ENCODE measurements at regions of chr14 and their contacts with region 1.

Region 1: DNA sequence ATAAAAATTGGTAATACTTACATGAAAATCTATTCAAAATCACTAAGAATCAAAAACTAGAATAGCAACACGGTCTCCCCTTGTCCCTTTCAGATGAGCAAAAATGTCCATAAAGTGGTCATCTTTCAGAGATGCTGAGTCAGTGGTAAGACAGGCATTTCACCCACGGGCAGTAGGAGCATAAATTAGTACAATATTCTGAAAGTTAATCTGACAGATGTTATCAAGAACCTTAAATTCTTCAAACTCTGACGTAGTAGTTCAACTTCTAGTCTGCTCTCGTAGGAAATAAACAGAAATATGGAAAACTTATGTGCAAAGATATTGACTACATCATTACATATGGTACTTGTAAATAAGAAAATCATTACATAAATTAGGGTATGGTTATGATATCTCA is 33.1 kb upstream of the GNPNAT1 start:
- DNase-seq: no peak
- ATAC-seq: peak in 1 of 2 experiments; percentile 47; a peak in 1 of 6 replicates
- H3K4me3 ChIP-seq: no peak overlapping the region
- H3K27ac ChIP-seq: no peak overlapping the region; a peak in 1 of 6 replicates
- H3K4me1 ChIP-seq: peaks cover 21% of the 10 kb centered on the region; the same call in 2 of the 3 replicates
- CTCF ChIP-seq: no peak
- EP300 ChIP-seq: no peak
- POLR2A ChIP-seq: no peak
- RAD21 ChIP-seq: no peak

Region 2: DNA sequence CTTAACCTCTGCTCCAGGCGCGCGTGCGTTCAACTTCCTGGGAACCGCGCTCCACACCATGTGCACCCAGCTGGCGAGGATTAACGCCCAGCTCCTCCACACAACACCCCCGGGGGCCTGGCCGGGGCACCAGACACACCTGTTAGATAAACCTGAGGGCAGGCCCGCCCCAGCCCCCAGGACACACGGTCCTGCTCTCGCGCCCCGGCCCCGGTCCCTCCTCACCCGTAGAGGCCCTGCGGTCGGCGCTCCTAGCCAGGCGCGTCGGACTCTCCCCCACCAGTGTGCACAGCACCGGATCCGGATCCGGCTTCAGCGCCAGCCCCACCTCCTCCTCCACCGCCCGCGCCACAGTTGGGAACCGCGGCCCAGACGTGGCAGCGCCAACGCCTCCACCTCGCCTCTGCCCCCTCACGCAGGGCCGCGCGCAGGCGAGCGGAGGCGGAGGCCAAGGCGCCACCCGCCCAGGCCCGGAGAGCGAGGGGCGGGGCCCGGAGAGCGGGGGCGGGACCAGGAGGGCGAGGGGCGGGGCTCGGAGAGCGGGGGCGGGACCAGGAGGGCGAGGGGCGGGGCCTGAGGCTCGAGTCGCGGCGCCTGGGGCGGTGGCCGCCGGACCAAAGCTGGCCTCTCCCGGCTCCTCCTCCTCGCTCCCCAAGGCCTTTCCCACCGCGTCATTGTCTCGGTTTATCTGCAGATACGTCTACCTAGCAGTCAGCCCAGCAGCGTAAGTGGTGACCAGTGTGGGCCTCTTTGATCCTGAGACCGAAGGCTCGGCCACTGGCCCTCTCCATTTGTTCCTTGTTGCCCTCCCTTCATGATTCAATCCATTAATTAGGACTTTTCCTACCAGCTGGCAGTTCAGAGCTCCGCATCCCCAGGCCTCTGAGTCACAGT is 33.1 kb before region 1 on chr14 and contains the start of gene GNPNAT1:
- CTCF ChIA-PET with region 1: no interaction called
- POLR2A ChIA-PET with region 1: no interaction called
- DNase-seq: peak; percentile 83 to 94
- ATAC-seq: peak; percentile 93 to 95
- H3K4me3 ChIP-seq: peak within 1 kb of the TSS; percentile 65
- H3K27ac ChIP-seq: peak within 1 kb of the TSS; percentile 92 to 96
- H3K4me1 ChIP-seq: peaks cover 19% of the 10 kb centered on the region
- CTCF ChIP-seq: no peak
- EP300 ChIP-seq: no peak
- POLR2A ChIP-seq: peak; percentile 90
- RAD21 ChIP-seq: no peak
- polyA plus RNA-seq, gene GNPNAT1: 56.9 and 74.3 TPM in 2 replicates

Region 3: DNA sequence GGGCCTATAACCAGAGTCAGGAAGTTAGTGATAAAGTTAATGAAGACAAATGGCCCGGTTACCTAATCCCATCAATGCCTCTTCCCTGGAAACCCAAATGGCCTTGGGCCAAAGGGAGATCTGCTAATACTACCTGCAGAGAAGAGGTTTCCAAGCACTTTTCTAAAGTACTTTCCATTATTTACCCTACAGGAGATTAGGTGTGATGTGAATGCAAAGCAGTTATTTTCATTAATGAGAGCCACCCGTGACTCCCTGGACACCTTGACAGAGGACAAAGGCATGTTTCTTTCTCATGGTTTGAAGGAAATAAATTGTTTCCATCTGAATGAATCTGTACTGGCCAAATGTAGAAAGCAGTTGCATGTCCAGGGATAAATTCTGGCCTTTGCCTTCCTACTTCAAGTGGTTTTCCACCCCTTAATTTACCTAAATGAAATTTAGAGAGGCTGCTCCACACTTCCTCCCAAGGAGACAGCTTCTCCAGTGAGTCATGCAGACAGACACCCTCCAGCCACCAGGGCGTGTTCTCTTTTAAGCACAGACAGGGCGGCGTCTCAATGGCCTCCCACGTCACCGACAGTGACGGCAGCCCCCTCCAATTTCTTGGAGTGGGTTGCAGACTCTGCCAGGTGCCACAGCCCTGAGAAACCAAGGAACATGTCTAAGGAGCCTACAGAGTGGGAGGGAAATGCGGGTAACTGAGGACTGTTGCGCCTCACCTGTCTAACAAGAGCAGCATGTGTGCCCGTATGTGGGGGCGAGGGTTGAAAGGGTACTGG is 10.8 kb after region 1 on chr14:
- CTCF ChIA-PET with region 1: interaction called, 11 read pairs
- POLR2A ChIA-PET with region 1: no interaction called
- DNase-seq: peak; percentile 66 to 87
- ATAC-seq: peak; percentile 94 to 95
- H3K4me3 ChIP-seq: no peak overlapping the region
- H3K27ac ChIP-seq: peak overlapping the region; percentile 74 to 87
- H3K4me1 ChIP-seq: peaks cover 29% of the 10 kb centered on the region
- CTCF ChIP-seq: no peak
- EP300 ChIP-seq: no peak
- POLR2A ChIP-seq: no peak
- RAD21 ChIP-seq: no peak

Region 4: GRCh38 chr14:52840916-52841315 is 16.4 kb after region 1 on chr14:
- CTCF ChIA-PET with region 1: interaction called, 11 read pairs
- POLR2A ChIA-PET with region 1: no interaction called
- DNase-seq: peak; percentile 33 to 63
- ATAC-seq: peak; percentile 92 to 94
- H3K4me3 ChIP-seq: no peak overlapping the region
- H3K27ac ChIP-seq: peak overlapping the region; percentile 44 to 62
- H3K4me1 ChIP-seq: peaks cover 17% of the 10 kb centered on the region
- CTCF ChIP-seq: no peak
- EP300 ChIP-seq: no peak
- POLR2A ChIP-seq: no peak
- RAD21 ChIP-seq: no peak

Region 5: GRCh38 chr14:52856139-52856538 is 31.6 kb after region 1 on chr14:
- CTCF ChIA-PET with region 1: no interaction called
- POLR2A ChIA-PET with region 1: no interaction called
- DNase-seq: no peak
- ATAC-seq: no peak
- H3K4me3 ChIP-seq: no peak overlapping the region
- H3K27ac ChIP-seq: no peak overlapping the region
- H3K4me1 ChIP-seq: peaks cover 7% of the 10 kb centered on the region; the same call in 2 of the 3 replicates
- CTCF ChIP-seq: no peak
- EP300 ChIP-seq: no peak
- POLR2A ChIP-seq: no peak
- RAD21 ChIP-seq: no peak

Region 6: GRCh38 chr14:52906071-52906601 is 81.6 kb after region 1 on chr14:
- CTCF ChIA-PET with region 1: no interaction called
- POLR2A ChIA-PET with region 1: no interaction called
- DNase-seq: peak in 1 of 2 experiments; percentile 61
- ATAC-seq: peak; percentile 74 to 77
- H3K4me3 ChIP-seq: 0 out of 3 replicates have a peak overlapping the region, but pooled peaks have one; percentile 16
- H3K27ac ChIP-seq: peak overlapping the region; percentile 80 to 93
- H3K4me1 ChIP-seq: peaks cover 73% of the 10 kb centered on the region
- CTCF ChIP-seq: no peak
- EP300 ChIP-seq: peak in 1 of 2 experiments; percentile 30; a peak in 2 of 5 replicates
- POLR2A ChIP-seq: no peak
- RAD21 ChIP-seq: no peak

Region 7: GRCh38 chr14:52961060-52961639 is 136.6 kb after region 1 on chr14:
- CTCF ChIA-PET with region 1: interaction called, 53 read pairs
- POLR2A ChIA-PET with region 1: interaction called, 3 read pairs
- DNase-seq: peak; percentile 73 to 80
- ATAC-seq: peak; percentile 81 to 96
- H3K4me3 ChIP-seq: no peak overlapping the region
- H3K27ac ChIP-seq: no peak overlapping the region; a peak in 1 of 6 replicates
- H3K4me1 ChIP-seq: no peaks in the 10 kb centered on the region
- CTCF ChIP-seq: peak; percentile 65
- EP300 ChIP-seq: no peak
- POLR2A ChIP-seq: no peak
- RAD21 ChIP-seq: peak; percentile 85 to 94

Region 8: GRCh38 chr14:53055003-53055402 is 230.5 kb after region 1 on chr14:
- CTCF ChIA-PET with region 1: interaction called, 25 read pairs
- POLR2A ChIA-PET with region 1: interaction called, 3 read pairs
- DNase-seq: peak; percentile 28 to 55
- ATAC-seq: peak; percentile 77 to 85; a peak in 4 of 6 replicates
- H3K4me3 ChIP-seq: no peak overlapping the region
- H3K27ac ChIP-seq: no peak overlapping the region
- H3K4me1 ChIP-seq: no peaks in the 10 kb centered on the region
- CTCF ChIP-seq: peak; percentile 83
- EP300 ChIP-seq: no peak
- POLR2A ChIP-seq: no peak
- RAD21 ChIP-seq: peak; percentile 78 to 80